ENCODE measurements at regions of chr17 and their contacts with region 1.

Region 1: DNA sequence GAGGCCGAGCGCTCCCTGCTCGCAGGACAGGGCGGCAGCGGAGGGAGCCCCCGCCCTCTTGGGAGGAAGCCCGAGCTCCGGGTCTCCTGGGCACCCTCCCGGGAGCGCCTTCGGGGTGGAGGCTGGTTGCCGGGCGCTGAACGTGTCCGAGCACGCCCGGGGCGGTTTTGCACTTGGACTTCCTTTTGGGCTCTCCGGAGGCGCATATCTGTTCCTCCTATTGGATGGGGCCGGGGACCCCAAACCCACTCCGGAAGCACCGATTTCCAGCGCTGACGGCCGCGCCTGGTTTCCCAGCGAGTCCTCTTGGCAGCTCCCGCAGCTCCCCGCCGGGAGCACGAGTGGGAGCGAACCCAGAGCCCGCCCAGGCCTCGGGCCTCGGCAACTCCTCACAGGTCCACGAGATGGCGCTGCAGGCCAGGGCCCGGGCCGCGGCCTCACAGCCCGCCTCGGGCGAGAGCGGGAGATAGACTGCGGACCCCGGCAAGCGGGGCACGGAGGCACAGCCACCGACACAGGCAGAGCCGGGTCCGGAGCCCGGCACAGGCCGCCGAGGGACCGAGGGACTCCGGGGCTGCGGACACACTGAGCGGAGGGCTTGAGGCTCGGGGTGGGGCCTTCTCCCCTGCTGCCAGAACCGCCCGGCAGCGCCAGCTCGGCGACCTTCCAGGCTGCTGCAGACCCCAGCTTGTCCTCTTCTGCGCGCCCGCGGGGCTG is 12.7 kb downstream of the TBX2 start:
- DNase-seq: peak; percentile 83 to 91
- H3K4me3 ChIP-seq: peak overlapping the region; percentile 65
- H3K4me3 Mint-ChIP-seq: peak overlapping the region; percentile 77
- H3K27ac Mint-ChIP-seq: peak overlapping the region; percentile 63
- H3K4me1 ChIP-seq: peaks cover 8% of the 10 kb centered on the region; the same call in 1 of the 2 replicates
- H3K4me1 Mint-ChIP-seq: no peaks in the 10 kb centered on the region
- H3K27me3 ChIP-seq: no peaks in the 10 kb centered on the region
- H3K27me3 Mint-ChIP-seq: no peaks in the 10 kb centered on the region
- CTCF ChIP-seq: peak; percentile 95 to 100

Region 2: DNA sequence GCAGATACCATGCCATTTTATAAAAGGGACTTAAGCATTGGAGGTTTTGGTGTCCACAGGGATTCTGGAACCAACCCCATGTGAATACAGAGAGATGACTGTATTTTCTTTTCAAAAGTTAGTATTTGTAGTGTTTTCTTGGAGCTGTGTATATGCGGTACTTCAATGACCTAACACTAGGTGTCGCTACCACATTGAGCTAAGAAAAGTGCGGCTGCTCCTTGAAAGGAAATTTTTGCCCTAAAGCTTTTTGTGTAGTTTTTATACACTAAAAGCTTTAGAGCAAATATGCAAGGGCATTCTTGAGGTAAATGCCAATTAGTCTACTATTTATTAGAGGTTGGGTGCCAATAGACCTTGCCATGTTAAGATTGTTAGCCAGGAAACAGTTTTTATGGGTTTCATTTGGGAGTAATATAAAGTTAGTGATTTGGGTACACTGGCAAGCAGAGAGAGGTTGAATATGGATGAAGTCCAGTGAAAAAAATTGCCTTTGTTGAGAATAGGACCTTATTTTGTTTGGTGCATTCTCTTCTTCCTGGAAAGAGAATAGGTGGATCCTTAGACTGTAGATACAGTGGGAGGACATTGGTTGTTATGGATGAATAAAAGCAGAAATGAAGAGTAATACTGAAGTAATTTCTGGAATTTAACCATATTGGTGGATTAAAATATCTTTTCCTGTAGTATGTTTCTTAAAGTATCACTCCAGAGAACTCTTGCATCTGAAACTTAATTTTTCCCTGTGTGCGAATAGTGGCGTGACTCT is 691.4 kb before region 1 on chr17:
- CTCF ChIA-PET with region 1: no interaction called
- POLR2A ChIA-PET with region 1: no interaction called
- intact Hi-C with region 1: loop called (anchors 1 kb)
- DNase-seq: peak; percentile 45 to 67
- H3K4me3 ChIP-seq: no peak overlapping the region
- H3K4me3 Mint-ChIP-seq: no peak overlapping the region
- H3K27ac Mint-ChIP-seq: no peak overlapping the region
- H3K4me1 ChIP-seq: no peaks in the 10 kb centered on the region
- H3K4me1 Mint-ChIP-seq: peaks cover 7% of the 10 kb centered on the region
- H3K27me3 ChIP-seq: no peaks in the 10 kb centered on the region
- H3K27me3 Mint-ChIP-seq: no peaks in the 10 kb centered on the region
- CTCF ChIP-seq: peak; percentile 87 to 90

Region 3: DNA sequence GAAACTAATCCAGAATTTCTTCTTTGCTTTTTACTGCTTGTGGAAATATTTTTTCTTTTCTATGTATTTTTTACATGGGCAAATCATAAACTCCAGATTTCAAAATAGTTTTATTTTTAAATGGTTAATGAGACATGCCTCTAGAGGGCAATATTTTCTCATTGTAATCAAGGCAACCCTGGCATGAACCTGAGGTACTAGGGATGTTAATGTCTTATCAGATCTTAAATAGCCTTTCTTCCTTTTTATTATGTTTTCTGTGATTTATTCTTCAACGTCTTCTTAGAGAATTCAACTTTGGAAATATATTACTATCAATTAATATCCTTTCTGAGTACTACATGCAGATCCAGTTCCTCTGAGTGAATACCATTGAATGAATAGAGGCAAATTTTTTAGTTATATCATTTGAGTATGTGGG is 410.0 kb before region 1 on chr17:
- CTCF ChIA-PET with region 1: no interaction called
- POLR2A ChIA-PET with region 1: no interaction called
- intact Hi-C with region 1: loop called (anchors 1 kb)
- DNase-seq: peak in 1 of 2 experiments; percentile 22
- H3K4me3 ChIP-seq: no peak overlapping the region
- H3K4me3 Mint-ChIP-seq: no peak overlapping the region
- H3K27ac Mint-ChIP-seq: no peak overlapping the region
- H3K4me1 ChIP-seq: no peaks in the 10 kb centered on the region
- H3K4me1 Mint-ChIP-seq: peaks cover 9% of the 10 kb centered on the region
- H3K27me3 ChIP-seq: no peaks in the 10 kb centered on the region
- H3K27me3 Mint-ChIP-seq: no peaks in the 10 kb centered on the region
- CTCF ChIP-seq: peak; percentile 45 to 53

Region 4: DNA sequence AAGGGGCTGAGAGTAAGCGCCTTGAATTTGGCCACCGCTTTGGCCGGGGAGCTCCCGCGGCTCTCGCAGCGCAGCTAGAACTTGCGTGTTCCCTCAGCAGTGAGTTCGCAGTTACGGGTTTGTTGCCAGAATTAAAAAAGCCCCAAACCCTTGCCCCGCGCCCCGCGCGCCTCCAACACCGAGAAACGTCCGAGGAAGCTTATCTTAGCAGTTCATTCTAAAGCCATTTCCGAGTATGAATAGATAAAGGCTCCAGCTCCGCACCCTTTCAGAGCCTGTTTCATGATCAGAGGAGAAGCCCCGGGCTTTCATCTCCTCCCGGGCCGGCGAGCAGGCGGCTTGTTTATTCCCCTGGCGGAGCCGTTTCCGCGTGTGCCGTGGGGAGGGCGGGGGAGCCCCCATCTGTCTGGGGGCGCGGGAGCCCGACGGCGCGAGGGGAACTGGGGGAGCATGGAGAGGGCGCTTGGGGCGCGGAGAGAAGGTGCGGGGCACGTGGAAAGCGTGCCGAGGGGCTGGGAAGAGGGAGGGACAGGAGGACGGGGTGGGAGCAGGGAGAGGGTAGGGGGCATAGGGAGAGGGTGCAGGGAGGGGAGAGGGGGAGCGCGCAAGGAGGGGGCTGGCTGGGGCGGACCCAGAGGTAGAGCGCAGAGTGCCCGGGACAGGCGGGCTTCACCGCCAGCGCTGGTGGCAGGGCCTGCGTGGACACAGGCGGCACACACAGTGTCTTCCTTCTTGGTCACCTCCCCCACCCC is 49.8 kb after region 1 on chr17:
- CTCF ChIA-PET with region 1: interaction called, 4 read pairs
- POLR2A ChIA-PET with region 1: interaction called, 3 read pairs
- intact Hi-C with region 1: loop called (anchors 2 kb)
- DNase-seq: peak; percentile 57 to 73
- H3K4me3 ChIP-seq: peak overlapping the region; percentile 37
- H3K4me3 Mint-ChIP-seq: peak overlapping the region; percentile 72
- H3K27ac Mint-ChIP-seq: peak overlapping the region; percentile 72
- H3K4me1 ChIP-seq: peaks cover 68% of the 10 kb centered on the region
- H3K4me1 Mint-ChIP-seq: peaks cover 59% of the 10 kb centered on the region
- H3K27me3 ChIP-seq: no peaks in the 10 kb centered on the region
- H3K27me3 Mint-ChIP-seq: no peaks in the 10 kb centered on the region
- CTCF ChIP-seq: no peak

Region 5: GRCh38 chr17:61536436-61536955 is 124.2 kb after region 1 on chr17:
- CTCF ChIA-PET with region 1: no interaction called
- POLR2A ChIA-PET with region 1: no interaction called
- intact Hi-C with region 1: no loop called
- DNase-seq: no peak
- H3K4me3 ChIP-seq: no peak overlapping the region
- H3K4me3 Mint-ChIP-seq: no peak overlapping the region
- H3K27ac Mint-ChIP-seq: no peak overlapping the region
- H3K4me1 ChIP-seq: no peaks in the 10 kb centered on the region
- H3K4me1 Mint-ChIP-seq: no peaks in the 10 kb centered on the region
- H3K27me3 ChIP-seq: no peaks in the 10 kb centered on the region
- H3K27me3 Mint-ChIP-seq: no peaks in the 10 kb centered on the region
- CTCF ChIP-seq: no peak

Region 6: GRCh38 chr17:61551255-61551742 is 139.0 kb after region 1 on chr17:
- CTCF ChIA-PET with region 1: interaction called, 3 read pairs
- POLR2A ChIA-PET with region 1: no interaction called
- intact Hi-C with region 1: loop called (anchors 1 kb)
- DNase-seq: peak in 1 of 2 experiments; percentile 52
- H3K4me3 ChIP-seq: no peak overlapping the region
- H3K4me3 Mint-ChIP-seq: no peak overlapping the region
- H3K27ac Mint-ChIP-seq: no peak overlapping the region
- H3K4me1 ChIP-seq: no peaks in the 10 kb centered on the region
- H3K4me1 Mint-ChIP-seq: no peaks in the 10 kb centered on the region
- H3K27me3 ChIP-seq: no peaks in the 10 kb centered on the region
- H3K27me3 Mint-ChIP-seq: peaks cover 6% of the 10 kb centered on the region
- CTCF ChIP-seq: peak; percentile 68 to 74

Region 7: GRCh38 chr17:61583242-61583641 is 170.9 kb after region 1 on chr17:
- CTCF ChIA-PET with region 1: interaction called, 32 read pairs
- POLR2A ChIA-PET with region 1: no interaction called
- intact Hi-C with region 1: loop called (anchors 1 kb)
- DNase-seq: peak in 1 of 2 experiments; percentile 35
- H3K4me3 ChIP-seq: no peak overlapping the region
- H3K4me3 Mint-ChIP-seq: no peak overlapping the region
- H3K27ac Mint-ChIP-seq: no peak overlapping the region
- H3K4me1 ChIP-seq: no peaks in the 10 kb centered on the region
- H3K4me1 Mint-ChIP-seq: peaks cover 7% of the 10 kb centered on the region
- H3K27me3 ChIP-seq: no peaks in the 10 kb centered on the region
- H3K27me3 Mint-ChIP-seq: peaks cover 2% of the 10 kb centered on the region
- CTCF ChIP-seq: peak in 1 of 2 experiments; percentile 38

Region 8: DNA sequence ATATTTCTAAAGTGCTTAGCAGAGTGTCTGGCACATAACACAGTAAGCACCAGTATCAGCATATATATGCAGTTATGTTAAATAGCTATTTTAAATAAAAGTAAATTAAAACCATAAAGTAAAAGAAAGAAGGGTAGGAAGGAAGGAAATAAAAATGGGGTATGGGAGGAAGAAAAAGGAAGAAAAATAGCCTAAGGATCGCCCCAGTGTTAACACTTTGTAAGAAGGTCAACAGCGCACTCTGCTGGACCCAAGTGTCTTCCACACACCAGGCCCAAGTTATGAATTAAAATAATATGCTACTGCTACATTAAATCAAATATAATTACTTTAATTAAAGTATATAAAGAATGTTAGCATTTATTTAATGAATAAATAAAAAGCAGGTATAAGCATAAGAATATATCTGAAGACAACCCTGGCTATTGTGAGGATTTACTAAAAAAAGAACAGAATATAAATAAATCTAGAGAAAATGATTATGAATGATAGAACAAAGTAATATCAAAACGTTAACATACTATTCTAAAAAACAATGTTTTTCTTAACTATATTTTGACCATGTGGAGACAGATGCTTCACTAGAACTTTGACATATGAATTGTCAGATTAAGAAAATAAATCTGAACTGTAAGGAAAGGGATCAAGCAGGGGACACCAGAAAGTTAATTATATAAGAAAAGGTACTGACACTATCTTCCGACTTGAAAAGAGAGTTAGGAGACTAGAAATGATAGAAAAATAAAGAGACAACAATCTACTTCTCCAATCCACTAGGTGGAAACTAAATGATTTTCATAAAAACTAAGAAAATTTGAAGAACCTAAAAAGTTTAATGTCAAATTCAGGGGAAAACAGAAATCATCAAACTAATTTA is 425.1 kb after region 1 on chr17:
- CTCF ChIA-PET with region 1: no interaction called
- POLR2A ChIA-PET with region 1: no interaction called
- intact Hi-C with region 1: loop called (anchors 1 kb)
- DNase-seq: peak; percentile 51 to 59
- H3K4me3 ChIP-seq: no peak overlapping the region
- H3K4me3 Mint-ChIP-seq: no peak overlapping the region
- H3K27ac Mint-ChIP-seq: no peak overlapping the region
- H3K4me1 ChIP-seq: peaks cover 4% of the 10 kb centered on the region; the same call in 1 of the 2 replicates
- H3K4me1 Mint-ChIP-seq: no peaks in the 10 kb centered on the region
- H3K27me3 ChIP-seq: no peaks in the 10 kb centered on the region
- H3K27me3 Mint-ChIP-seq: no peaks in the 10 kb centered on the region
- CTCF ChIP-seq: peak; percentile 88 to 90